A673 (cell line): ENCODE measurements at regions of chr7 and their contacts with region 1.

Region 1: GRCh38 chr7:155069992-155070751 is at the start of gene HTR5A:
- DNase-seq: peak; percentile 88
- H3K4me3 ChIP-seq: no peak within 1 kb of the TSS
- H3K27ac ChIP-seq: no peak within 1 kb of the TSS
- H3K4me1 ChIP-seq: no peaks in the 10 kb centered on the region
- H3K27me3 ChIP-seq: peaks cover 34% of the 10 kb centered on the region
- CTCF ChIP-seq: no peak
- total RNA-seq, gene HTR5A: not detected in 2 replicates

Region 2: DNA sequence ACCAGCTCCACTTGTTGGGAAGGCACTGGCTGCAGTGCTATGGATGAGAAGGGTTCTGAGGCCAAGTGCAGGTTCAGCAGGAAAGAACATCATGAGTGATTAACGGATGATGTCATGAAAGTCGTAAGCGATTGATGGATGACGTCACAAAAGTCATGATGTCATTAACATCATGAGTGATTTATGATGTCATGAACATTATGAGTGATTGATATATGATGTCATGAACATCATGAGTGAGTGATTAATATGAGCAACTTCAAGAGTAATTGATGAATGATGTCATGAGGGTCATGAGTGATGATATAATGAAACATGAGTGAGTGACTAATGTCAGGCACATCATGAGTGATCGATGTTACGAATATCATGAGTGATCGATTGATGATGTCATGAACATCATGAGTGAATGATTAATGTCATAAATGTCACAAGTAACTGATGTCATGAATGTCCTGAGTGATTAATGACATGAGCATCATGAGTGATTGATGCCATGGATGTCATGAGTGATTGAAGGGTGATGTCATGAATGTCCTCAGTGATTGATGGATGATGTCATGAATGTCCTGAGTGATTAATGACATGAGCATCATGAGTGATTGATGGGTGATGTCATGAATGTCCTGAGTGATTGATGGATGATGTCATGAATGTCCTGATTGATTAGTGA is 252.8 kb before region 1 on chr7:
- CTCF ChIA-PET with region 1: no interaction called
- POLR2A ChIA-PET with region 1: no interaction called
- intact Hi-C with region 1: no loop called
- DNase-seq: no peak
- H3K4me3 ChIP-seq: no peak overlapping the region
- H3K27ac ChIP-seq: no peak overlapping the region
- H3K4me1 ChIP-seq: no peaks in the 10 kb centered on the region
- H3K27me3 ChIP-seq: peaks cover 36% of the 10 kb centered on the region
- CTCF ChIP-seq: no peak

Region 3: DNA sequence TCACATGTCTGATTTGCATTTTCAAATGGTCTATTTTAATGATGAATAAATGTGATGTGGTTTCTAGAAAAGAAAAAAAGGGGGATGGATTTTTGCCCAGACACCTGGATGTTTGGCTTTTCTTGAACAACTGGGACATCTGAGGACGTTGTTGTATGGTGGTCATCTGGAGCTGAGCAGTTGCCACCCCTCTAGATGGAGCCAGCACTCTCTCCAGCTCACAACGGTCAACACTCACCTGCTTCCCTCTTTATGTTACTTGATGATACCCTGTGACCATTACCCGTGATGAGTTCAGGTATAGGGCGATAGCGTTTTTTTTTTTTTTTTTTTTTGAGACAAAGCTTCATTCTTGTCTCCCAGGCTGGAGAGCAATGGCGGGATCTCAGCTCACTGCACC is 37.2 kb before region 1 on chr7:
- CTCF ChIA-PET with region 1: no interaction called
- POLR2A ChIA-PET with region 1: interaction called, 11 read pairs
- intact Hi-C with region 1: no loop called
- DNase-seq: no peak
- H3K4me3 ChIP-seq: no peak overlapping the region
- H3K27ac ChIP-seq: no peak overlapping the region
- H3K4me1 ChIP-seq: no peaks in the 10 kb centered on the region
- H3K27me3 ChIP-seq: peaks cover 4% of the 10 kb centered on the region
- CTCF ChIP-seq: no peak

Region 4: GRCh38 chr7:155053002-155053401 is 17.2 kb before region 1 on chr7:
- CTCF ChIA-PET with region 1: no interaction called
- POLR2A ChIA-PET with region 1: no interaction called
- intact Hi-C with region 1: no loop called
- DNase-seq: peak; percentile 2
- H3K4me3 ChIP-seq: no peak overlapping the region
- H3K27ac ChIP-seq: no peak overlapping the region
- H3K4me1 ChIP-seq: no peaks in the 10 kb centered on the region
- H3K27me3 ChIP-seq: peaks cover 31% of the 10 kb centered on the region
- CTCF ChIP-seq: no peak

Region 5: DNA sequence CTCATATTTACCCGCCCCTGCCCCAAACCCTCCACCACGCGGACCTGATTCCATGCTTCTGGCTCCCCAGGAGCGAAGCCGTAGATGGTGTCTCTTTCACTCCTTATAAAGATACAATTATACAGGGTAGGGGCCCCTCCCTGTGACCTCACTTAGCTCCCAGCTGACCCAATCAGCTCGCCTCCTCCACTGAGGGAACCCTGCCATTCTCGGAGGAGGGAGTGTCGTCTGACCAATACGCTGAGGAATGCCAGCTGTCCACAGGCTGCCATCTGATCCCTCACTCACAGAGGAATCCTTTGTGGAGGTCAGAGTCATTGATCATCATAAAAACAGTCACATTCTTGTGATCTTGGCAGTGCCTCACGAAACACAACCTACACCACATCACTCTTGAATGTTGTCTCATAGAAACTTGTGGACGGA is 160.0 kb after region 1 on chr7:
- CTCF ChIA-PET with region 1: no interaction called
- POLR2A ChIA-PET with region 1: no interaction called
- intact Hi-C with region 1: no loop called
- DNase-seq: no peak
- H3K4me3 ChIP-seq: no peak overlapping the region
- H3K27ac ChIP-seq: no peak overlapping the region
- H3K4me1 ChIP-seq: no peaks in the 10 kb centered on the region
- H3K27me3 ChIP-seq: no peaks in the 10 kb centered on the region
- CTCF ChIP-seq: no peak

Region 6: DNA sequence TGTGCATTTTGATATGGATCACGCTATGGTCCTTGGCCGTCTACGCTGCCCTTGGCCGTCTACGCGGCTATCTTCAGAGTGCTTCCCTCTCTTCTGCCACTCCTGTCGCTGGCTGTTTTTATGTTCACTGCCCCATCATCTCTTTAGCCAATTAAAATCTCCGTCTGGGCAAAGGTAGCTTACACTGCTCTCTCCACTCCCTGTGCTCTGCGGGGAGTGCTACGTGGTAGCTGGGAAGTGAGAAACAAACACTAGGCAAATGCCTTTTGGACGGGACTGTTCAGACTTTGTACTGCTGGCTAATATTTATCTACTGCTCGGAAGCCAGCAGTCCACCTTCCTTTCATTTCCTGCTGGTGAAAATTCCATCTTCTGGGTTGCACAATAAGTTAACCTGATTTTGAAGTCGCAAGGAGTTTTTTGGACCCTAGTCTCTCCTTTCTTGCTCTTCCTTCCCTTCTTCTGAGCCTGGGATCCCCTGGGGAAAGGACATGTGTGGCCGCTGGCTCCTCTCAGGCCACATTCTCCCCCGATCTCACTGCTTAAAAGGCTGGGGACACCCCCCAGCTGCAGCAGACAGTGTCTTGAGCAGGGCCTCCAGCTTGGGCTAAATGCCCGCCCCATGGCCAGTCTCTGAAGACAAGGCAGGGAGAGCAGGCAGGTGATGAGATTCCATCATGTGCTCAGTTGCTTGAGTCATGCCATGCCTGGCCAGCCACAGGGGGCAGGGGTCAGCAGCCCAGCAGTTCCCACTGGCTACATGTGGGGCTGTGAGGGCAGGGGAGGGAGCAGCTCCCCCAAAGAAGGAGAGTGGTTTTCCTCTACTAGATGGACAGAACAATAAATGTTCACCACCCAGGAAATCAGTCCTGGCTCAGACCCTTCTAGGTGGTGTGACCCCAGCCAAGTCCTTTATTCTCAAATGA is 548.8 kb after region 1 on chr7:
- CTCF ChIA-PET with region 1: no interaction called
- POLR2A ChIA-PET with region 1: no interaction called
- intact Hi-C with region 1: no loop called
- DNase-seq: no peak
- H3K4me3 ChIP-seq: no peak overlapping the region
- H3K27ac ChIP-seq: no peak overlapping the region
- H3K4me1 ChIP-seq: no peaks in the 10 kb centered on the region
- H3K27me3 ChIP-seq: peaks cover 5% of the 10 kb centered on the region
- CTCF ChIP-seq: no peak